WTC11 (cell line): ENCODE measurements at regions of chr1 and their contacts with region 1.

Region 1: GRCh38 chr1:167687919-167688519 is 33.8 kb upstream of the MPZL1 start:
- DNase-seq: peak; percentile 86
- ATAC-seq: peak; percentile 24
- H3K4me3 Mint-ChIP-seq: no peak overlapping the region
- H3K27ac Mint-ChIP-seq: no peak overlapping the region
- H3K4me1 Mint-ChIP-seq: peaks cover 39% of the 10 kb centered on the region
- H3K27me3 Mint-ChIP-seq: peaks cover 5% of the 10 kb centered on the region; the same call in 1 of the 2 replicates
- CTCF ChIP-seq: peak; percentile 85

Region 2: DNA sequence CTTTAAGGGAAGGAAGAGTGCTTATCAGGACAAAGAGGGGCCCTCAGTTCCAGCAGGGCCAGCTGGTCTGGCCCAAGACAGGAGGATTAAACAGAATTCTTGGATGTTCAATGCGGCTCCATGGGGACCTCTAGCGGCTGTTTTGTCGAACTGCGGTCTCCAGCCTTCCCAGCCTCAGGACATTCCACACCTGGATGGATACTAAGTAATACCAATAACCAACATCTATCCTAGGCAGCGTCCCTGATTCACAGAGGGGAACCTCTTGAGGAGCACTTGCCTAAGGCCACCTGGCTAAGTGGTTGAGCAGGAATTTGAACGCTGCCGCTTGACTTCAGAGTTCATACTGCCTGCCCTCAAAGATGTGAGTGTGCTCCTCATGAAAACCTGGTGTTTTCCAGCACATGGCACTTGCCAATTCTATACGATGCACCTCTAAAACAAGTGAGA is 154.1 kb before region 1 on chr1:
- CTCF ChIA-PET with region 1: interaction called, 10 read pairs
- POLR2A ChIA-PET with region 1: no interaction called
- DNase-seq: peak; percentile 86
- ATAC-seq: peak; percentile 89
- H3K4me3 Mint-ChIP-seq: no peak overlapping the region
- H3K27ac Mint-ChIP-seq: no peak overlapping the region
- H3K4me1 Mint-ChIP-seq: peaks cover 9% of the 10 kb centered on the region
- H3K27me3 Mint-ChIP-seq: no peaks in the 10 kb centered on the region
- CTCF ChIP-seq: peak; percentile 83

Region 3: GRCh38 chr1:167553136-167554027 is 134.6 kb before region 1 on chr1 and contains the start of gene CREG1:
- CTCF ChIA-PET with region 1: interaction called, 54 read pairs
- POLR2A ChIA-PET with region 1: interaction called, 3 read pairs
- DNase-seq: peak; percentile 96
- ATAC-seq: peak; percentile 98
- H3K4me3 Mint-ChIP-seq: peak within 1 kb of the TSS; percentile 87
- H3K27ac Mint-ChIP-seq: no peak within 1 kb of the TSS; the same call in 1 of the 2 replicates
- H3K4me1 Mint-ChIP-seq: peaks cover 26% of the 10 kb centered on the region; the same call in 1 of the 2 replicates
- H3K27me3 Mint-ChIP-seq: peaks cover 10% of the 10 kb centered on the region
- CTCF ChIP-seq: no peak
- total RNA-seq, gene CREG1: 21.0 to 24.7 TPM (median 21.7 TPM) in 3 replicates

Region 4: DNA sequence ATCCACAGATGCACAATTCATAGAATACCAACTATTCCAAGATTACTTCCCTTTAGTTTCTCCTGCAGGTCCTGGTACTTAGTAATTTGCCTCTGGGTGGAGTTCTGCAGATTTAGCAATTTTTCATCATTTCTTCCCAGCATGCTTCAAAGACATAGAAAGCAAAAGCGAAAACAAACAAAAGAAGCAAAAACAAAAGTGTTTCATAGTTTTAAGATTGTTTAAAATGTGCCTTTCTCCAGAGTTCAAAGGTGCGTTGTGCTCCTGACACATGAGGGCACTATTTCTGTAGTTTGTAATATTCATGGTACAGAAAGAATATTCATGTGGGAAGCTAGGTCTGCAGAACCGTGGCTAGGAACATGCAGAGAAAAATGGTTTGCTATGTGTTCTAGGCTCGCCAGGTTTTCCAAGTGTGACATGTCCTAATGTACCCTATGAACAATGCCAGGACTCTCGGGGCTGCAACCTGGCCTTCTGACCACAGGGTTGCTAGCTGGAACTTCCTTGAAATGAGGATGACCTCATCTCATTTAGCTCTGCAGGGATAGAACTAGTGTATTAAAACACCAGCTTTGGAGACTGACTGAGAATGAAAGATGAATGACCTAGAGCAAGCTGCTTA is 88.0 kb before region 1 on chr1:
- CTCF ChIA-PET with region 1: interaction called, 37 read pairs
- POLR2A ChIA-PET with region 1: interaction called, 3 read pairs
- DNase-seq: no peak
- ATAC-seq: no peak
- H3K4me3 Mint-ChIP-seq: no peak overlapping the region
- H3K27ac Mint-ChIP-seq: no peak overlapping the region
- H3K4me1 Mint-ChIP-seq: peaks cover 2% of the 10 kb centered on the region; the same call in 1 of the 2 replicates
- H3K27me3 Mint-ChIP-seq: no peaks in the 10 kb centered on the region
- CTCF ChIP-seq: no peak

Region 5: GRCh38 chr1:167635156-167635648 is 52.8 kb before region 1 on chr1:
- CTCF ChIA-PET with region 1: interaction called, 10 read pairs
- POLR2A ChIA-PET with region 1: interaction called, 4 read pairs
- DNase-seq: peak; percentile 71
- ATAC-seq: peak; percentile 89
- H3K4me3 Mint-ChIP-seq: peak overlapping the region; percentile 38
- H3K27ac Mint-ChIP-seq: no peak overlapping the region
- H3K4me1 Mint-ChIP-seq: peaks cover 38% of the 10 kb centered on the region
- H3K27me3 Mint-ChIP-seq: peaks cover 66% of the 10 kb centered on the region
- CTCF ChIP-seq: no peak

Region 6: GRCh38 chr1:167663002-167663772 is 24.8 kb before region 1 on chr1:
- CTCF ChIA-PET with region 1: interaction called, 13 read pairs
- POLR2A ChIA-PET with region 1: no interaction called
- DNase-seq: no peak
- ATAC-seq: no peak
- H3K4me3 Mint-ChIP-seq: no peak overlapping the region
- H3K27ac Mint-ChIP-seq: no peak overlapping the region
- H3K4me1 Mint-ChIP-seq: peaks cover 6% of the 10 kb centered on the region; the same call in 1 of the 2 replicates
- H3K27me3 Mint-ChIP-seq: peaks cover 3% of the 10 kb centered on the region; the same call in 1 of the 2 replicates
- CTCF ChIP-seq: no peak

Region 7: DNA sequence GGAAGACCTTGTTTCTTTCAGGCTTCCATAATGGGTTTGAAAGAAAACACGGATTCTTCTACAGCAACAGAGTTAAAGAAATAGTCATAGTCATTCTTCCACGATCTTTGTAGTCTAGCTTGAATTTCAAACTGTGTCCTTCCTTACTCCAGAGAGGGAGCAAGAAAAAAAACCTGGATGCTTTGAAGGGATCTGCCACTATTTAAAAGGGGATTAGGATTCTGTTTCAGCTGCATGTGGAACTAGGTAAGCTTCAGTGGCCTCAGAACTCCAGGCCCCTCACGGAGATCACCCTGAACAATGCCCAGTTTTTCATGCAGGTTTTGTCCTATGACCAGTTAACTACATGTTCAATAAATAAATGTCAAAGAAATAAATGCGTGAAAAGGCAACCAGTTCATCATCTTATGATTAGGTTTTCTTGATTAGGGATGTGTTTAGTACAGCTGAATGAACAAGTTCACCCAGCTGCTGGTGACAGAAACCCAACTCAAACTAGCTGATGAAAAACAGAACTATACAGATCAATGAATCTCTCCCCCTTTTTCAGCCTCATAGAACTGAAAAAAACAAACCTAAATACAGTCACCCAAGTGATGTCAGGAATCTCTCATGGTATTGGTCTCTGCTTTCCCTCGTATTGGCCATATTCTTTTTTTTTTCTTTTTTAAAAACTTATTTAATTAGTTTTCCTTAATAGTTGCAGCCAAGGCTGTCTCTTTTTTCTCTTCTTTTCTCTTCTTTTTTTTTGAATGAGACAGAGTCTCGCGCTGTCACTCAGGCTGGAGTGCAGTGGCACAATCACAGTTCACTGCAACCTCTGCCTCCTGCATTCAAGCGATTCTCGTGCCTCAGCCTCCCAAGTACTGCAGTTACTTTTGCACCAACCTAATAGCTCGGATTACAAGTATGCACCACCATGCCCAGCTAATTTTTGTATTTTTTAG is 19.2 kb after region 1 on chr1:
- CTCF ChIA-PET with region 1: interaction called, 11 read pairs
- POLR2A ChIA-PET with region 1: no interaction called
- DNase-seq: no peak
- ATAC-seq: peak; percentile 18
- H3K4me3 Mint-ChIP-seq: no peak overlapping the region
- H3K27ac Mint-ChIP-seq: no peak overlapping the region
- H3K4me1 Mint-ChIP-seq: peaks cover 48% of the 10 kb centered on the region
- H3K27me3 Mint-ChIP-seq: peaks cover 11% of the 10 kb centered on the region
- CTCF ChIP-seq: no peak